Psoas muscle (tissue), 8 donors: ENCODE measurements at regions of chr1 and their contacts with region 1.

Region 1: DNA sequence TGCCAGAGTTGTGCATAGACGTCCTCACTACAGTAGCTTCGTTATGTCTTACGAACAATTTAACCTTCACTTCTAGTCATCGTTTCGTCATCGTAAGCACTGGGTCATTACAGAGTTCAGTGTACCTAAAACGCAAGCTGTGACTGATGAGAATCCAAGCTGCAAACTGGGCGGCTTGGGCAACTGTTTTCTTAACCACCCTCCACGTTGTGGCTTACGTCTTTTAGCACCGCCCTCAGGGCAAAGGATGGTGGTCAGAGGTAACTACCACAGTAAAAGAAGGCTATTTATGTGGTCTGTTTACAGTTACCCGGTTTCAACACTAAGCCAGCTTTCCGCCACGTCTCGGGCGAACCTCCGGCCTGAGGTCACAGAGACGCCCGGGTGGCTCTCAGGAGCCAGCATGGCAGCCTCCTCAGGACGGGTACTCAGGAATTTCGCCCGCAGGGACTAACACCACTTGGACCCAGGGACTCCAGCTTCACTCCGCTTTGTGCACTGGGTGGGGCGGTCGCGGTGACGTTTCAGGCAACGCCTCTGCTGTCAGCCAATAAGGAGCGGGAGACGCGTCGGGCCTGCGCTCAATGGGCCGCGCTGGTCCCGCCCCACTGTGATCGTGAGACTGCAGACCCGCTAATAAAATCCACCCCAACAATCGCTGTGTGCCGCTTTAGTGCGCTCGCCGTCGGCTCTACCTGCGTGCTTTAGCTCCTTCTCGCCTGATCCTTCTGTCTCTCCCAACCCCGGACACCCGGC is at the start of gene CTH:
- DNase-seq: peak; percentile 96 to 98
- ATAC-seq: peak; percentile 98 to 100 (median 98)
- H3K4me3 ChIP-seq: peak within 1 kb of the TSS; percentile 88
- H3K27ac ChIP-seq: peak within 1 kb of the TSS; percentile 94
- H3K4me1 ChIP-seq: peaks cover 4% of the 10 kb centered on the region
- H3K27me3 ChIP-seq: no peaks in the 10 kb centered on the region
- CTCF ChIP-seq: no peak
- total RNA-seq, gene CTH: 0.79 to 2.9 (median 1.5) TPM

Region 2: GRCh38 chr1:70205434-70206118 is 205.2 kb before region 1 on chr1 and contains the start of gene LRRC40:
- intact Hi-C with region 1: loop called in 1 of 2 experiments (anchors 1 kb)
- DNase-seq: peak; percentile 98
- ATAC-seq: peak; percentile 98 to 100 (median 100)
- H3K4me3 ChIP-seq: peak within 1 kb of the TSS; percentile 97
- H3K27ac ChIP-seq: peak within 1 kb of the TSS; percentile 88
- H3K4me1 ChIP-seq: peaks cover 54% of the 10 kb centered on the region
- H3K27me3 ChIP-seq: no peaks in the 10 kb centered on the region
- CTCF ChIP-seq: no peak
- total RNA-seq, gene LRRC40: 5.5 to 8.7 (median 7.3) TPM

Region 3: DNA sequence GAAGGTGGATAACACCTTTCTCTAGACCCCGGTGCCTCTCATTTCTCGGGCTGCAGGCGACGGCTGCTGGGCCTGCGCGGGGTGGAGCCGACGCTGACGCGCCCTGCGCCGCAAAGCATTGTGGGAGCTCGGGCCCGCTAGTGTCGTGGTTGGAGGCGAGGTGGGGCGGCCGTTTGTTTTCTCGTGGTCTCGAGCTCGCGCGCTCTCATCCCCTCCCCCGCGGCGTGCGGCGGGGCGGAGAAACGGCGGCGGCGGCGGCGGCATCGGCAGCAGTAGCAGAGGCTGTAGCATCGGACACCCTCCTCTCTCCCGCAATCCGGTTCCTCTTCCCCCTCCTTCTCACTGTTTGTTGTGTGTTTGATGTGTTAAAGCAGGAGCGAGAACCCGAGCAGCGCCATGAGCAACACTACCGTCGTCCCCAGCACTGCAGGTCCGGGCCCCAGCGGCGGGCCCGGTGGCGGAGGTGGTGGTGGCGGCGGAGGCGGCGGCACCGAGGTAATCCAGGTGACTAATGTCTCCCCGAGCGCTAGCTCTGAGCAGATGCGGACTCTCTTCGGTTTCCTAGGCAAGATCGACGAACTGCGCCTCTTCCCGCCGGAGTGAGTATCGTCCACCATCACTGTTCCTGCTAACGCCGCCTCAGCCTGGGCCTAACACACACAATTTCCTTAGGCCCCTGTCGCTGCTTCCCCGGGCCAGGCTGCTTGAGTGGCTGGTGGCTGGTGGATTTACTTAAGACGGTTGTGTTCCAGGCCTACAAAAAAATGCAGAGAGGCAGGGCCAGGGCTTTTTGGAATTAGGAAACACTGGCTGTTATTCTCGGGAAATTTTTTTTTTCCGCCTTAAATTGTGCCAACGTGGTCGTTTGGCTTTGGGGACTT is 189.3 kb before region 1 on chr1 and contains the start of gene SRSF11:
- intact Hi-C with region 1: loop called in 1 of 2 experiments (anchors 5 kb)
- DNase-seq: peak; percentile 98
- ATAC-seq: peak; percentile 99
- H3K4me3 ChIP-seq: peak within 1 kb of the TSS; percentile 82
- H3K27ac ChIP-seq: peak within 1 kb of the TSS; percentile 95
- H3K4me1 ChIP-seq: peaks cover 45% of the 10 kb centered on the region
- H3K27me3 ChIP-seq: no peaks in the 10 kb centered on the region
- CTCF ChIP-seq: peak; percentile 10
- total RNA-seq, gene SRSF11: 47.0 to 70.3 (median 53.2) TPM

Region 4: GRCh38 chr1:70354332-70355110 is 56.3 kb before region 1 on chr1 and contains the start of gene ANKRD13C:
- intact Hi-C with region 1: loop called in 1 of 2 experiments (anchors 1 kb)
- DNase-seq: peak; percentile 92 to 95
- ATAC-seq: peak; percentile 98
- H3K4me3 ChIP-seq: peak within 1 kb of the TSS; percentile 78
- H3K27ac ChIP-seq: peak within 1 kb of the TSS; percentile 90
- H3K4me1 ChIP-seq: peaks cover 37% of the 10 kb centered on the region
- H3K27me3 ChIP-seq: no peaks in the 10 kb centered on the region
- CTCF ChIP-seq: no peak
- total RNA-seq, gene ANKRD13C: 10.5 to 18.1 (median 11.7) TPM

Region 5: GRCh38 chr1:70361727-70362398 is 48.9 kb before region 1 on chr1:
- intact Hi-C with region 1: loop called in 1 of 2 experiments (anchors 5 kb)
- DNase-seq: no peak
- ATAC-seq: no peak
- H3K4me3 ChIP-seq: no peak overlapping the region
- H3K27ac ChIP-seq: no peak overlapping the region
- H3K4me1 ChIP-seq: no peaks in the 10 kb centered on the region
- H3K27me3 ChIP-seq: no peaks in the 10 kb centered on the region
- CTCF ChIP-seq: no peak